ENCODE measurements at regions of chr16 and their contacts with region 1.

Region 1: GRCh38 chr16:74641969-74642368 is 24.7 kb downstream of the RFWD3 start:
- DNase-seq: no peak
- H3K4me3 ChIP-seq: no peak overlapping the region
- H3K27ac ChIP-seq: no peak overlapping the region
- H3K4me1 ChIP-seq: no peaks in the 10 kb centered on the region
- H3K27me3 ChIP-seq: no peaks in the 10 kb centered on the region
- CTCF ChIP-seq: no peak

Region 2: GRCh38 chr16:74448992-74449434 is 193.0 kb before region 1 on chr16:
- CTCF ChIA-PET with region 1: no interaction called
- dilution Hi-C with region 1: no loop called
- in situ Hi-C with region 1: no loop called
- intact Hi-C with region 1: no loop called
- DNase-seq: peak; percentile 81
- H3K4me3 ChIP-seq: no peak overlapping the region
- H3K27ac ChIP-seq: peak overlapping the region; percentile 82
- H3K4me1 ChIP-seq: peaks cover 36% of the 10 kb centered on the region
- H3K27me3 ChIP-seq: no peaks in the 10 kb centered on the region
- CTCF ChIP-seq: no peak

Region 3: DNA sequence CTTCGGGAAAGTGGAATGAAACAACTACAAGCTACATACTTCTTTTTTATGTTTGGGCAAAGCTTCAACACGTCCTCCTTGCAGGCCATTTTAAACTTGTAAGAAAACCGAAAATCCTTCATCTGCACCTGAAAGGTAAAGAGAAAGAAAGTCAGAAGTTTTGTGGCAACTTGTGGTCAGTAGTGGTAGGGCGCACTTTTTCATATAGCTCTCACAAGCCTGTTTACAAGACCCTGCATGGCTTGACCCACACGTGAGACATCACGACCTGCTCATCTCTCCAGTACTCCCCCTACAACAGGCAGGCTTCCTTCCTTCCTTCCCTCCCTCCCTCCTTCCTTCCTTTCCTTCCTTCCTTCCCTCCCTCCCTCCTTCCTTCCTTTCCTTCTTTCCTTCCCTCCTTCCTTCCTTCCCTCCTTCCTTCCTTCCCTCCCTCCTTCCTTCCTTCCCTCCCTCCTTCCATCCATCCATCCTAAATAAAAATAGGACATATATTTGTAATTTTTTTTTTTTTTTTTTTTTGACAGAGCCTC is 172.0 kb before region 1 on chr16:
- CTCF ChIA-PET with region 1: no interaction called
- dilution Hi-C with region 1: loop called (anchors 5 kb)
- in situ Hi-C with region 1: no loop called
- intact Hi-C with region 1: no loop called
- DNase-seq: no peak
- H3K4me3 ChIP-seq: no peak overlapping the region
- H3K27ac ChIP-seq: no peak overlapping the region
- H3K4me1 ChIP-seq: peaks cover 9% of the 10 kb centered on the region
- H3K27me3 ChIP-seq: no peaks in the 10 kb centered on the region
- CTCF ChIP-seq: no peak

Region 4: GRCh38 chr16:74601126-74601871 is 40.7 kb before region 1 on chr16:
- CTCF ChIA-PET with region 1: no interaction called
- dilution Hi-C with region 1: no loop called
- in situ Hi-C with region 1: no loop called
- intact Hi-C with region 1: no loop called
- DNase-seq: peak; percentile 37
- H3K4me3 ChIP-seq: no peak overlapping the region
- H3K27ac ChIP-seq: no peak overlapping the region
- H3K4me1 ChIP-seq: peaks cover 23% of the 10 kb centered on the region
- H3K27me3 ChIP-seq: no peaks in the 10 kb centered on the region
- CTCF ChIP-seq: no peak

Region 5: GRCh38 chr16:74611721-74612120 is 30.2 kb before region 1 on chr16:
- CTCF ChIA-PET with region 1: no interaction called
- dilution Hi-C with region 1: no loop called
- in situ Hi-C with region 1: no loop called
- intact Hi-C with region 1: no loop called
- DNase-seq: no peak
- H3K4me3 ChIP-seq: no peak overlapping the region
- H3K27ac ChIP-seq: no peak overlapping the region
- H3K4me1 ChIP-seq: peaks cover 7% of the 10 kb centered on the region
- H3K27me3 ChIP-seq: no peaks in the 10 kb centered on the region
- CTCF ChIP-seq: no peak

Region 6: GRCh38 chr16:74695450-74696422 is 53.8 kb after region 1 on chr16:
- CTCF ChIA-PET with region 1: no interaction called
- dilution Hi-C with region 1: no loop called
- in situ Hi-C with region 1: no loop called
- intact Hi-C with region 1: no loop called
- DNase-seq: peak; percentile 83
- H3K4me3 ChIP-seq: peak overlapping the region; percentile 38 to 49 (median 46)
- H3K27ac ChIP-seq: no peak overlapping the region
- H3K4me1 ChIP-seq: peaks cover 17% of the 10 kb centered on the region
- H3K27me3 ChIP-seq: no peaks in the 10 kb centered on the region
- CTCF ChIP-seq: no peak